ENCODE measurements at regions of chr9 and their contacts with region 1.

Region 1: DNA sequence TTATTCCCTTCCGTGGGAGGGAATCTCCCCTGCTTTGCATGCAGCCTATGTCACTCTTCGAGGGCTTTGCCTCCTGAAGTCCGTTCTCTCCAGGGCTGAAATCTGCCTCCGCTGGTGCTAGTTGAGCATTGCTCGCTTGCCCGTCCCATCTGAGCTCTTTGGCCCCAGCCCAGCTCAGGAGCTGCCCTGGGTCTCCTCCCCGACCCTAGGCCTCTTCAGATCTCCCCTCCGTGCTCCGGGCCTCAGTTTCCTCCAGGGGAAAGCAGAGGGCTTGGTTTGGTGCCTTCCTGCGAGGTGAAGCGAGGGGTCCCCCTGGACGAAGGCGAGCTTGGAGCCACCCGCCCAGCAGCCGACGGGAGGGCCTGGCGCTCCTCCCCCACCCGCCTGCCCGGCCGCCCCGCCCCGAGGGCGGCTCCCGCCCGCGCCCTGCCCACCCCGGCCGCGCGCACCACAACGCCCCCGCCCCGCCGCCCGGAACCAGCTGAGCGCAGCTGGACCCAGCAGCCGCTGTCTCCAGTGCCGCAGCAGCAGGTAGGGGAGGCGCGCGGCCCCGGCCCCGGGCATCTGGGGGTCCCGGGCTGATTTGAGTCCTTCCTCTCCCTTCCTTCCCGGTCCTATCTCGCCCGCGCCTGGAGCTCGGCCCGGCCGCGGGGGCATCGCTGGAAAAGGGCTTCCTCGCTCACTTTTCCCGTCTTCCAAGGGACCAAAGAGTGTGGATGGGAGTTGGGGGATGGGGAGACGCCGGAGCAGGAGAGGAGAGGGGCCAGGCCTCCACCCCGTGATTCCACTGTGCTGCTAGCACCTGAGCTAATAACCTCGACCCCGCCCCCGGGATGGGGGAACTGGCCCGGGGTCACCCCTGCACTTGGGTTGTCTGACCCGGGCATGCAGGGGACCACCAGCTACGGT is at the start of gene GSN:
- DNase-seq: peak; percentile 62
- H3K4me3 Mint-ChIP-seq: peak within 1 kb of the TSS; percentile 67
- H3K27ac Mint-ChIP-seq: peak within 1 kb of the TSS; percentile 48
- H3K4me1 Mint-ChIP-seq: peaks cover 20% of the 10 kb centered on the region
- H3K27me3 Mint-ChIP-seq: peaks cover 22% of the 10 kb centered on the region
- total RNA-seq, gene GSN: 2.9 to 3.4 TPM

Region 2: DNA sequence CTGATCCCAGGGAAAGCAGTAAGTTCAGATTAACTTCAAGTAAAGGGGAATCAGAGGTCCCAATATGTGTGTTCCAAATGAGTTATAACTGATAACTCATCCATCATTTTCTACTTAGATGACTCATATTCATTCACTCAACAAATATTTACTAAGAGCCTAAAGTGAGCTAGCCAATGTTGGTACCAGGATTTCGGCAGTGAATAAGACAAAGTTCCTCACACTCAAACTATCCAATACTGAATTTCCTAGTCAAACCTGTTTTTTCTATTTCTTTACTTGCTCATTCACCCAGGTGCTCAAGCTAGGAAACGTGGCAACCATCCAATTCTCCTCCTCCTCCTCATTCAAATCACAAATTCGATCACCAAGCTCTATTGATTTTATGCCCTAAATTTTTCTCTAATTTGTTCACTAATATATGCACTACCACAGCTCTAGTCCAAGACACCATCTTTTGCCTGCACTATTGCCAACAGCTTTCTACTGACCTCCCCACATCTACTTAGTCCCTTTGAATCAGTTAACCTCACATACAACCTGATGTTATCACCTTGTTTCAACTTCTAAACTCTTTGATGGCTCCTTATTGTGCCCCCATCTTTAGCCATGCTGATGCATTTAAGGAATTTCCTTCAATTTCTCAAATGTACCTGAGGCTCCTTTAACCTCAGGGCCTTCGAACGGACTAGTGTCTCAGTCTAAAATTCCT is 500.3 kb before region 1 on chr9:
- CTCF ChIA-PET with region 1: no interaction called
- POLR2A ChIA-PET with region 1: no interaction called
- DNase-seq: no peak
- H3K4me3 Mint-ChIP-seq: no peak overlapping the region
- H3K27ac Mint-ChIP-seq: no peak overlapping the region
- H3K4me1 Mint-ChIP-seq: peaks cover 45% of the 10 kb centered on the region
- H3K27me3 Mint-ChIP-seq: no peaks in the 10 kb centered on the region

Region 3: GRCh38 chr9:121278535-121279261 is 10.8 kb after region 1 on chr9:
- CTCF ChIA-PET with region 1: interaction called, 20 read pairs
- POLR2A ChIA-PET with region 1: no interaction called
- DNase-seq: peak; percentile 57
- H3K4me3 Mint-ChIP-seq: no peak overlapping the region
- H3K27ac Mint-ChIP-seq: no peak overlapping the region
- H3K4me1 Mint-ChIP-seq: peaks cover 6% of the 10 kb centered on the region
- H3K27me3 Mint-ChIP-seq: no peaks in the 10 kb centered on the region

Measured in activated CD4-positive, alpha-beta T cell treated with anti-CD3 and anti-CD28 coated beads, Interleukin-2, amount 10 ng/mL, durations not matched to agents 7 days and 5 days (primary cell).